ENCODE measurements at regions of chr22 and their contacts with region 1.

Region 1: DNA sequence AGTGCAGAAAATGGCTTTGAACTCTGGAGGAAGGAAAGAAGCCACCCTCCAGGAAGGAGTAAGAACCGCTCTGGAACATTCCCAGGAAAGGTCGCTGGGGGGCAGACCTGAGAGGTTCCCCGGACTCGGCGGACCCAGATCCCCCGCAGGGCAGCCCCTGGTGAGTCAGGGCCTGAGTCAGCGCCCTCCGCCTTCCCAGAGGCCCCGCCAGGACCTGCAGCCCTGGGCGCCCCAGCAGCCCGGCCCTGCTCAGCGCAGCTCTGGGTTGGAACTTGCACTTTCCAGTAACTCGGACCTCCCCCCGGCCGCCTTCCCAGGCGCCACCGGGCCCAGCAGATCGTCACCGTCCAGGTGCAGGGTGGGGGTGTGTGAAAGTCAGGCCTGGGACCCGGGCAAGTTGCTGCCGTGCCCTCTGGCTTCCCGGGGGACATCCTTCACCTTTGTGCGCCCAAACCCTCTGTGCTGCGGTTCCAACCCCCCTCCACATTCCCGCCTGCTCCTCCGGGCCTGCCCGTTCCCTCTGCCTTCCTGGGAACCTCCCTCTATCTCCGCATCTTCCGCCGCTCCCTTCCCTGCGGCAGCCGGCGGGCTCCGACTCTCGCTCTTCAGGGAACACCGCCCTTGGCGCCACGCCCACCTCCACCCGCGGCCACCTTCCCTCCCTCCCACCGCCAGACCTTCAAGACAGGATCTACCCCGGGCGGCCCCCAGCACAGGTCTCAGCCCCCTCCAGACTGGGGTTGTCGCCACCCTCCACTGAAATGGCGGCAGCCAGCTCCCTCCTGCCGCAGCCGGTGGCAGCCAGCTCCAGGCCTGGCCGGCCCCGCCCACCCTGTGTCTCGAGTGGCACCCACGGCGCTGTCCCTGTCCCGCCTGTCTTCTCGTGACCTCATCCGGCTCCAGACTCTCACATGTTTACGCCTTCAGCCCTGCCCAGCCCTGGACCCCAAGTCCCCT is 36.8 kb upstream of the WNT7B start:
- DNase-seq: peak; percentile 95 to 98 (median 98)
- H3K4me3 ChIP-seq: peak overlapping the region; percentile 13 to 58 (median 38)
- H3K27ac ChIP-seq: peak overlapping the region; percentile 85 to 100 (median 95)
- H3K4me1 ChIP-seq: peaks cover 12 to 17% of the 10 kb centered on the region in 2 donors
- H3K27me3 ChIP-seq: no peaks in the 10 kb centered on the region
- CTCF ChIP-seq: peak; percentile 36 to 87 (median 70)
- POLR2A ChIP-seq: peak; percentile 79 to 93

Region 2: GRCh38 chr22:45785458-45785857 is 228.3 kb before region 1 on chr22:
- intact Hi-C with region 1: no loop called
- DNase-seq: peak in 6 of 7 donors; percentile 42 to 75 (median 72)
- H3K4me3 ChIP-seq: no peak overlapping the region
- H3K27ac ChIP-seq: peak overlapping the region in 2 of 5 donors; percentile 10 to 60
- H3K4me1 ChIP-seq: peaks cover 22 to 42% of the 10 kb centered on the region in 2 donors
- H3K27me3 ChIP-seq: no peaks in the 10 kb centered on the region
- CTCF ChIP-seq: no peak
- POLR2A ChIP-seq: no peak

Region 3: GRCh38 chr22:45876136-45877035 is 137.4 kb before region 1 on chr22:
- intact Hi-C with region 1: no loop called
- DNase-seq: peak in 4 of 7 donors; percentile 5 to 35 (median 8)
- H3K4me3 ChIP-seq: no peak overlapping the region
- H3K27ac ChIP-seq: no peak overlapping the region
- H3K4me1 ChIP-seq: peaks cover 0 to 4% of the 10 kb centered on the region in 2 donors
- H3K27me3 ChIP-seq: peaks cover 18% of the 10 kb centered on the region
- CTCF ChIP-seq: no peak
- POLR2A ChIP-seq: no peak

Region 4: GRCh38 chr22:46071451-46072109 is 57.8 kb after region 1 on chr22:
- intact Hi-C with region 1: loop called (anchors 5 to 10 kb)
- DNase-seq: peak; percentile 95 to 97 (median 96)
- H3K4me3 ChIP-seq: peak overlapping the region in 3 of 4 donors; percentile 58 to 89 (median 76)
- H3K27ac ChIP-seq: peak overlapping the region; percentile 80 to 98 (median 97)
- H3K4me1 ChIP-seq: peaks cover 45 to 53% of the 10 kb centered on the region in 2 donors
- H3K27me3 ChIP-seq: no peaks in the 10 kb centered on the region
- CTCF ChIP-seq: no peak
- POLR2A ChIP-seq: peak; percentile 55 to 86

Measured in adrenal gland (tissue), 19 donors.